ENCODE measurements at regions of chr3 and their contacts with region 1.

Region 1: DNA sequence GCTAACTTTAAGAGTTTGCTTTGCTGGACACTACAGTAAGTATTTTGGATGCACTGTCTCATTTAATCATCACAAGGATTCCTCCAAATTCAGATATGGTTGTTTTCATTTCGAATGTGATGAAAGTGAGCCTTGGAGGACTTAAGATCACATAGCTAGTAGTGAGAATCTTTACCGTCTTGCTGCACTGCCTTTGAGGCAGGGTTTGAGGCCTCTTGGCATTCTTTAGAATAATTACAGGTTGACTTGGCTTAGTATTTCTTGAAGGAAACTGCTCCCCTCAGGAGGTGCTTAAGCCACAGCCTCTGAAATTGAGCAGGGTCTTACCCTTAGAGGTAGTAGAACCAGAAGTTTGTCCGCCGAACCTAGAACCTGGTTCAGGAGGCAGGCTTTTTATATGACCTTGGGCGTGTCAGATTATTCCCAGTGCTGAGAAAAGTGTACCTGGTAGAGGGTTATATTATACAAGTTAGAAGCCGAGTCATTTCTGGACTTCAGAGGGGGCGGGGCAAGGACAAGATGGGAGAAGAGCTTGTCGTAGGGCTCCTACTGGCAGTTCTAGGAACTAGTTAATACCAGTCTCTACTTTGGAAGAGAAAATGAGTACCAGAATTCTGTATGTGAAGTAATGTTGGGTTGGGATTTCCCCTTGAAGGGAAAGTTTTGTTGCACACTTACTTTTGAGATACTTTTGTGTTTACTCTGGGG is 1.1 kb downstream of the TFG start:
- DNase-seq: peak in 2 of 6 donors; percentile 20 to 24
- ATAC-seq: peak in 3 of 4 donors; percentile 3 to 9 (median 3)
- H3K4me3 ChIP-seq: peak overlapping the region; percentile 49 to 77 (median 65)
- H3K27ac ChIP-seq: peak overlapping the region; percentile 88 to 97 (median 96)
- H3K4me1 ChIP-seq: peaks cover 0 to 17% (median 9%) of the 10 kb centered on the region in 3 donors
- H3K27me3 ChIP-seq: no peaks in the 10 kb centered on the region
- CTCF ChIP-seq: no peak

Region 2: DNA sequence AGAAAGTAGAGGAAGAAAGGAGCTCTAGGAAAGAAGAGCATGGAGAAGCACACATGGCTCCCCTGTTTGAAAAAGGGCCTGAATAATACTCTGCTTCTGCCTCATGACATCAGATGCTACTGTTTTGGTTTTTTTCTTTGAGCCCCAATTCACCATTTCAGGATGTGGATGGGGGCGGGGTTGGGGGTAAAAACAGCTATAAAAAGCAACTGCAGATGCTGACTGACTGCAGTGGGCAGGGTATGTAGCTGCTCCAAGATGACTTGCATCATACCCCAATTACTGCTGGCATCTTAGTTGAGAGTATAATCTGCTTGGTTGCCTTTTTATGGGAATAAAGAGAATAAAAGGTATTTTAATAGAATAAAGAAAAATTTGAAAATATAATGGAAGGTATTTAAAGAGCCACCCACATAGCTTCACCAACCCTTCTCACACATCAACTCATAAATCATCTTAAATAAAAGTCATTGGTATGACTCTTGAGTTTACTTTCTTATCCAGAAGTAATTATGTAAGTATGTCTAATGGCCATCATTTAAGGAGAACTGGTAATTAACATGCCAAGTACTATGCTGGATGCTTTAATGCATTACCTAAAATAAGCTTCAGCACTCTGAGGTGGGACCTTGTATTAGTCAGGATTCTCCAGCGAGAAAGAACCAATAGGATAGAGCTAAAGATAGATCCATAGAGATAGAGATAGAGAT is 254.4 kb before region 1 on chr3:
- intact Hi-C with region 1: loop called in 1 of 3 experiments (anchors 10 kb)
- DNase-seq: no peak
- ATAC-seq: no peak
- H3K4me3 ChIP-seq: no peak overlapping the region
- H3K27ac ChIP-seq: no peak overlapping the region
- H3K4me1 ChIP-seq: peaks cover 0 to 8% (median 0%) of the 10 kb centered on the region in 3 donors
- H3K27me3 ChIP-seq: no peaks in the 10 kb centered on the region
- CTCF ChIP-seq: no peak